ENCODE measurements at regions of chr15 and their contacts with region 1.

Region 1: DNA sequence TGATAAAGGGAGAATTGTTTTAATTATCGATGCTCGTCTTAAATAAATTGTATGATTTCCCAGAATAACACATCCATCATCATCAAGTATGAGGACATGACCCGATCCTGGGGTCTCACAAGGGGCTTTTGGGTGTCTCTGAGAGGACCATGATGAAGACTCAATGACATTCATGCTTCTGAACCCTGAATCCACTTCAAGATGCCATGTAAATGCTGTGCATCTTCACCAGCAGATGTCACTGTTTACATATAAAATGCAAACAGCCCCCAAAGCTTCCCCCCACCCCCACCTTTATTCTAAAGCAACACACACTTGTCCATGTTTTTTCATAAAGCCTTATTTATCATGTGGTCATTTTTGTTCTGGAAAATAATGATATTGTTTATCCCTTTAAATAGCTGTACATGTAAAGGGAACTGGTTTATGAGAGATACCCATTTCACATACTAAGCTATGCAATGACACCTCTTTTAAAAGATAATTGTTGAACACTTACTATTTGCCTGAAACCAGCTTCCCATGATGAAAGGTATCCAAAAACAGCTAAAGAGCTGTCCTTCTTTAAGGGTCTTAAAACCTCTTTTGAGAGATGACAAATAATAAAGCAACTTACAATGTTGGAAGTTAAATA is 69.7 kb upstream of the UBE3A start:
- DNase-seq: peak; percentile 7
- H3K4me3 ChIP-seq: no peak overlapping the region
- H3K27ac ChIP-seq: no peak overlapping the region
- H3K27me3 ChIP-seq: no peaks in the 10 kb centered on the region
- CTCF ChIP-seq: peak; percentile 73

Region 2: DNA sequence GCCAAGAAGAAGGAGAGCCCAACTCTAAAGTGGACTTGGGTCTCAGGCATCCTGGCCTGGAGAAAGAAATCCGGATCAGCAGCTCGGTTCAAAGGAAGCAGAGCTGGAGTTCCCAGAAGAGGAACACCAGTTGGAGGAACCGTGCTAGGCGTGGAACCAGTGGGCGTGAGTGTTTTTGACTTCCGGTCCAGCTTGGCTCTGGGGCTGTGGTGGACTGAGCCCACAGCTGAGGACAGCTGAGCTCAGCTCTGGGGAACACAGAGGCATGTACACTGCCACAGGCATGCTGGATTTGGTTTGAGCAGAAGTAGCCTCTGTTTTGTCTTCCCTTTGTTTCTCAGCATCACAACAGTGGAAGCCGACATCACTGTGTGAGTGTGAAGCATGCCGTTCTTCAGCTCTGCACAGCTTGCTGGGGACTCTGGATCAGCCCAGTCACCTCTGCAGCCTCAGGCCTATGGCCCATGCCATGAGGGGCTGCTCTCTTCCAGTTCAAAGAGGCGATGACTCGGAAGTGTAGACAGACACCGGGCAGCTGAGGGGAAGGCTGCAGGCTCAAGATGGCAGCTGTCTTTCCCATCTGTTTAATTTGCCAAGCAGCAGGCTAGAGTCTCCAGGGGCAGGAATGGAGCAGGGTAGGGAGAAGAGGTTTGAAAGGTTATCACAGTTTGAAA is 116.2 kb after region 1 on chr15:
- CTCF ChIA-PET with region 1: no interaction called
- POLR2A ChIA-PET with region 1: no interaction called
- DNase-seq: no peak
- H3K4me3 ChIP-seq: no peak overlapping the region
- H3K27ac ChIP-seq: no peak overlapping the region
- H3K27me3 ChIP-seq: peaks cover 2% of the 10 kb centered on the region
- CTCF ChIP-seq: no peak

Region 3: GRCh38 chr15:25933456-25934158 is 425.1 kb after region 1 on chr15:
- CTCF ChIA-PET with region 1: interaction called, 32 read pairs
- POLR2A ChIA-PET with region 1: no interaction called
- DNase-seq: peak; percentile 57
- H3K4me3 ChIP-seq: peak overlapping the region; percentile 55
- H3K27ac ChIP-seq: no peak overlapping the region
- H3K27me3 ChIP-seq: no peaks in the 10 kb centered on the region
- CTCF ChIP-seq: peak; percentile 92

Region 4: GRCh38 chr15:26095710-26096330 is 587.3 kb after region 1 on chr15:
- CTCF ChIA-PET with region 1: interaction called, 22 read pairs
- POLR2A ChIA-PET with region 1: no interaction called
- DNase-seq: no peak
- H3K4me3 ChIP-seq: no peak overlapping the region
- H3K27ac ChIP-seq: no peak overlapping the region
- H3K27me3 ChIP-seq: no peaks in the 10 kb centered on the region
- CTCF ChIP-seq: peak; percentile 52

Region 5: DNA sequence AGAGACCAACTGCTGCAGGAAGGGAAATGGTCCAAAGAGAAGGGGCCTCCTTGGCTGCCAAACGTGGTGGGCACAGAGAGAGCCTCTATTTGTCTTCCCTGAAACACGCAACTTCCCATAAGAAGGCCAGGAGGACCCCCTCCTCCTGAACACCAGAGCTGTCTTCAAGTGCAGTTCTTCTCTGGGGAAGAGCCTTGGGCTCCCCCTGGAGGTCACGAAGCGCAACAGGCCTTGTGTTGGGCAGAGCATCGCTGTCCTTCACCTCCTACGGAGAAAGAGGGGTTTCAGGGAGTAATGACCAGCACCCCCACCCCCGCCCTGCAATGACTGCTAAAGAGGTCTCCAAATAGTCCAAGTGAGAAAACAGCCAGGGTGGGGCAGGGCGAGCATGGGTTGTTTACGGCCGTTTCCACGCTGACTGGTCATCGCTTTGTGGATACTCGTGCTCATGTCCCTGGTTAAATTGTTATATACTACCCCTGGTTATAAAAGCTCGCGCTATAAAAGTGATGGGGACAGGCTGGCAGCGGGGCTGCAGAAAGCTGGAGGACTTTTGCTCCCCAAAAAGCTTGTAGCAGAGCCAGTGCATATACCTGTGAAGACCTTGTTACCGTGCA is 752.1 kb after region 1 on chr15:
- CTCF ChIA-PET with region 1: interaction called, 30 read pairs
- POLR2A ChIA-PET with region 1: no interaction called
- DNase-seq: no peak
- H3K4me3 ChIP-seq: no peak overlapping the region
- H3K27ac ChIP-seq: no peak overlapping the region
- H3K27me3 ChIP-seq: no peaks in the 10 kb centered on the region
- CTCF ChIP-seq: peak; percentile 77

Region 6: GRCh38 chr15:26325495-26325894 is 817.0 kb after region 1 on chr15:
- CTCF ChIA-PET with region 1: interaction called, 11 read pairs
- POLR2A ChIA-PET with region 1: no interaction called
- DNase-seq: no peak
- H3K4me3 ChIP-seq: no peak overlapping the region
- H3K27ac ChIP-seq: no peak overlapping the region
- H3K27me3 ChIP-seq: no peaks in the 10 kb centered on the region
- CTCF ChIP-seq: no peak

Region 7: DNA sequence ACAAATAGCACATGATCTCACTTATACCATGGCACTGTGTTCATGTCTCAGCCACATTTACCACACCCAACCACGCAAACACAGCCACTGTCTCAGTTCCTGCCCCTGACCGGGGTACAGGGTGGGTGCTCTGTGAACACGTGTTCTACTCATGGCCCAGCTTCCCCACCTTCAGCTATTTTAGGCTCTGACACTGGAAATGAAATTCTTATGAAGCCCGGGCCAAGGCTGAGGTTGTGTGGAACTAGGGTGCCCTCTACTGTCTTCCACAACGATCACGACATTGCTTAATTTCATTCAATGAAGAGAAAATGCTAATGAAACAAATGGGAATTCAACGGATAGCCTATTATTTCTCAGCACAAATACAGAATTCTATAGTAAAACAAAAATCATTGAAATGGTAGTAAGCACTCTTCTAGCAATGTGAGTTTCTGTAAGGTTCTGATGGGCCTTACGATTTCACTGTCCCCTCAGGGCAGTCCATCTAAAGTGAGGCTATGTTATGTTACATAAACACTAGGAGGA is 1356.2 kb after region 1 on chr15:
- CTCF ChIA-PET with region 1: interaction called, 28 read pairs
- POLR2A ChIA-PET with region 1: no interaction called
- DNase-seq: no peak
- H3K4me3 ChIP-seq: no peak overlapping the region
- H3K27ac ChIP-seq: no peak overlapping the region
- H3K27me3 ChIP-seq: peaks cover 13% of the 10 kb centered on the region
- CTCF ChIP-seq: peak; percentile 63

Measured in AG04450 (cell line).